ENCODE measurements at regions of chr17 and their contacts with region 1.

Region 1: GRCh38 chr17:62778689-62779681 is 29.1 kb downstream of the MARCHF10 start:
- DNase-seq: peak; percentile 98
- ATAC-seq: peak; percentile 84
- H3K4me3 ChIP-seq: no peak overlapping the region
- H3K27ac ChIP-seq: peak overlapping the region; percentile 46
- H3K4me1 ChIP-seq: peaks cover 22% of the 10 kb centered on the region
- H3K27me3 ChIP-seq: no peaks in the 10 kb centered on the region
- CTCF ChIP-seq: no peak
- POLR2A ChIP-seq: peak; percentile 29; the same call in 1 of the 2 replicates
- RAD21 ChIP-seq: 0 out of 2 replicates have a peak, but pooled peaks have one; percentile 25

Region 2: DNA sequence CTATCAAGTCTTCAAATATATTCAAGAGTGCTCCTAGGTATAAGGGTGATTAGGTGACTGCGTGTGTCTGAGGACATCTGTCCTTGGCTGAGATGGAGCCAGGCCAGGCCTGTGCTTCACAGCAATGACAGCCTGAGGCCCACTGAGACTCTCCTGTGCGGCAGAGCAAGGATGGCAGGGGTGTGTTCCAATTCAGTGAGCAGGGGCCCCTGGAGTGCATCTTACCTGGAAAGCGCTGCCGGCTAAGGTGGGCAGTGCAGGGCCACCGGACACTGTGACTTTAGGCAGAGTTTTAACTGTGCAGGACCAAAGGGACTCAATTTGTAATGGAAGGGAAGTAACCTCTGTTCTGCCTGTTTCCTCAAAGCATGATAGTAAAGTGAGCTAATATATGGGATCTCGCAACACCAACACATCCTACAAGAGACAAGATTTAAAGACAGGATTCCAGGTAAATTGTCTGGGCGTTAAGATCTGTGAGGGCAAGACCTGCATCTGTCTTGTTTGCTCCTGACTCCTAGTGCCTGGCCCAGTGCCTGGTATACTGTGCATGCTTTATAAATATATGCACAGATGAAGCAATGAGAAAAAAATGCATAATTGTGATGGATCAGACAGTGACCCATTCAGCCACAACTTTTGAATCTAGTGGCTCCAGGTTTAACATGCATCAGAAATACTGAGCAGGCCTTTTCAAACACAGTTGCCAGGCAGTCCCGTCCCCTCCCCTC is 64.8 kb before region 1 on chr17:
- CTCF ChIA-PET with region 1: no interaction called
- POLR2A ChIA-PET with region 1: no interaction called
- dilution Hi-C with region 1: no loop called
- in situ Hi-C with region 1: no loop called
- intact Hi-C with region 1: loop called (anchors 5 kb)
- DNase-seq: peak; percentile 79
- ATAC-seq: peak; percentile 64
- H3K4me3 ChIP-seq: no peak overlapping the region
- H3K27ac ChIP-seq: no peak overlapping the region
- H3K4me1 ChIP-seq: peaks cover 12% of the 10 kb centered on the region
- H3K27me3 ChIP-seq: no peaks in the 10 kb centered on the region
- CTCF ChIP-seq: no peak
- POLR2A ChIP-seq: no peak
- RAD21 ChIP-seq: no peak

Region 3: DNA sequence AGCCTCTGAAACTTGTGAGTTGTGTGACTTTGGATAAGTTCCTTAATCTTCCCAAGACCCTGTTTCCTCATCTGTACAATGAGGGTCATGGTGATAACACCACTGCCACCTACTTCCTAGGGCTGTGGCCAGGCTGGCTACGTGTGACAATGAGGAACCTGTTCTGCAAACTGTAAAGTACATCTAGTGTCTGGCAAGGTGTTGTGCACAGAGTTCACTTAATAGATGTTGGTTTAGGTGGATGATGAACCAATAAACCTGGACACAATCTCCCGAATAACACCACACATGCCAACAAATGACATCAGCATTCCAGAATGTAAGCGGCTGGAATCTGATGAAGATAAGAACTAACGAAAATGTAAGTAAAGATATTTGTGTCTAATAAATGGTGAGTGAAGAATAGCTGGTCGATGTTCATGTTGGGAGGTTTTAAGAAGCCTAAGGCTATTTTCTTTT is 53.2 kb before region 1 on chr17:
- CTCF ChIA-PET with region 1: no interaction called
- POLR2A ChIA-PET with region 1: no interaction called
- dilution Hi-C with region 1: no loop called
- in situ Hi-C with region 1: no loop called
- intact Hi-C with region 1: no loop called
- DNase-seq: peak; percentile 64
- ATAC-seq: peak; percentile 60
- H3K4me3 ChIP-seq: no peak overlapping the region
- H3K27ac ChIP-seq: no peak overlapping the region
- H3K4me1 ChIP-seq: peaks cover 7% of the 10 kb centered on the region
- H3K27me3 ChIP-seq: no peaks in the 10 kb centered on the region
- CTCF ChIP-seq: no peak
- POLR2A ChIP-seq: no peak
- RAD21 ChIP-seq: no peak